Activated CD4-positive, alpha-beta T cell treated with anti-CD3 and anti-CD28 coated beads, Interleukin-2, amount 10 ng/mL, durations not matched to agents 24 days and 14 days (primary cell): ENCODE measurements at regions of chr2 and their contacts with region 1.

Region 1: GRCh38 chr2:168346725-168347477 is 99.5 kb upstream of the STK39 start:
- DNase-seq: peak; percentile 90
- H3K4me3 Mint-ChIP-seq: peak overlapping the region; percentile 84
- H3K27ac Mint-ChIP-seq: no peak overlapping the region
- H3K4me1 Mint-ChIP-seq: peaks cover 6% of the 10 kb centered on the region
- H3K27me3 Mint-ChIP-seq: peaks cover 21% of the 10 kb centered on the region

Region 2: GRCh38 chr2:168323529-168324021 is 23.3 kb before region 1 on chr2:
- intact Hi-C with region 1: no loop called
- DNase-seq: no peak
- H3K4me3 Mint-ChIP-seq: no peak overlapping the region
- H3K27ac Mint-ChIP-seq: no peak overlapping the region
- H3K4me1 Mint-ChIP-seq: peaks cover 2% of the 10 kb centered on the region
- H3K27me3 Mint-ChIP-seq: peaks cover 12% of the 10 kb centered on the region

Region 3: GRCh38 chr2:168434146-168434545 is 87.2 kb after region 1 on chr2:
- intact Hi-C with region 1: loop called (anchors 5 kb)
- DNase-seq: no peak
- H3K4me3 Mint-ChIP-seq: no peak overlapping the region
- H3K27ac Mint-ChIP-seq: no peak overlapping the region
- H3K4me1 Mint-ChIP-seq: peaks cover 33% of the 10 kb centered on the region
- H3K27me3 Mint-ChIP-seq: no peaks in the 10 kb centered on the region

Region 4: GRCh38 chr2:168687314-168687713 is 340.4 kb after region 1 on chr2:
- intact Hi-C with region 1: loop called (anchors 2 kb)
- DNase-seq: peak; percentile 64
- H3K4me3 Mint-ChIP-seq: no peak overlapping the region
- H3K27ac Mint-ChIP-seq: no peak overlapping the region
- H3K4me1 Mint-ChIP-seq: peaks cover 8% of the 10 kb centered on the region
- H3K27me3 Mint-ChIP-seq: no peaks in the 10 kb centered on the region

Region 5: DNA sequence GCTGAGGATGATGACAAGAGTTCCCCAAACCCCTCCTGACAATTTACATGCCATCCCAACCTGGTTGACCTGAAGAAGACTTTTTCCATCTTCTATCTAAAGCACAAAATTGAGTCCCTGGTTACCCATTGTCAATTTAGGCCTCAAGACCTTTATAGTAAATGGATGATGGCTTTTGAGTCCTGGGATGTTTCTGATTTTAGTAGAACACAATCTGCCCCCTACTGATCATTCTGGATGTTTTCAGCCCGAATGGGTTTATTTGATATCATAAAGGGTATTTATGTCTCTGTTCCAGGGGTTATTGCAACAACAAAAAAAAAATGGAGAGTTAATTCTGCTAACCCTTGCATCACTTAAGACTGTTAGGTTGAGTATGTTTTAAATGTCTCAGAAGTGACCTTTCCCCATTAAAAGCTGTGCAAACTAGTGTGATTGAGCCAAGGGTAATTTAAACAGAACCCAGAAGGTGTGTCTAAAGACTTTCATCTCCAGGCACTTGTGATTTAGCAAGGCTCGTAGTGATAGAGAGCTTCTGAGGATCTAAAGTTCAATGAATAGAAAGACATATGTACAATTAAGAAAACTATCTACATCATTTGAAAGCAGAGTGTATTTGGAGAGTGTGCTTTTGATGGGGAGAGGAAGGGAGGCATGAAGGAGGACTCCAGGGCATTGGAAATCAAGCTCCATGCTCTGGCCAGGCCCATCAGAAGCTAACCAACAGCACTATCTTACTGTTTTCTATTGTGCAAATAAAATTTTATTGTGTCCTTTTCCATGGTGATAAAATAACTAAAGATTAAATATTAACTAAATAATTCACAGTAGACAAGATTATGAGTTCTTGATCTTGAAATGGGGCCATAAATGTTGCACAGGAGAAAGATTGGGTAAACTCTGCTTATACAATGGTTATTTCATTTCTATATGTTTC is 358.9 kb after region 1 on chr2:
- intact Hi-C with region 1: loop called (anchors 1 kb)
- DNase-seq: no peak
- H3K4me3 Mint-ChIP-seq: no peak overlapping the region
- H3K27ac Mint-ChIP-seq: no peak overlapping the region
- H3K4me1 Mint-ChIP-seq: no peaks in the 10 kb centered on the region
- H3K27me3 Mint-ChIP-seq: no peaks in the 10 kb centered on the region

Region 6: DNA sequence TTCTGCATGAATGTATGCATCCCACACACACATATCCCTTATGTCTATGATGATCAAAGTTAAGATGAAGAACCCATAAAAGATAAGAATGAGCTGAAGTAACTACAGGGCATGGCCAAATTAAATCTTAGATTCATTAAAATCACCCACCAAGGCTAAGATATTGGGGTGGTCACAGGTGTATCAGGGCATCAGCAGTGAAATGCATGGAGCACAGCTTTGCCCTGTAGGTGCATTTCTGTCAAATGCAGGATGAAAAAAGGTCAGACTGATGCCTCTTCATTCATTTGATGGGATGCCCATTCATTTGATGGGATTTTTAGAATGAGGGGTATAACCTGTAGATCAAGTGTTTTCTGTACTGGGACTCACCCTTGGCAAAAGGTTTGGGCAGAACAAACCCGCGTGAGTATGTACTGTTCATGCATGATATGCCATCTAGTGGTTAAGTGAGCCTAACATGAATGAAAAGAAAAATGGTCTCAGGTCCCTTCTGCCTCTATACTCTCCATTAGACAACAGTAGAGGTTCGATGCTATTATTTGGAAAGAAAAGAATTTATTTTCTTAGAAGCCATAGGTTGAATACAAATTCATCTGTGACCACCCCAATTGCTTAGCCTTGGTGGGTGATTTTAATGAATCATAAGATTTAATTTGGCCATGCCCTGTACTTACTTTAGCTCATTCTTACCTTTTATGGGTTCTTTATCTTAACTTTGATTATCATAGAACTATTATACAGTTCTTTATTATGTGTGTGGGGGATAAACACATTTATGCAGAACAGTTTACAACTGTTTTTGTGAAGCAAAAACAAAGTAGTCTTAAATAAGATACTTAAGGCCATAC is 412.3 kb after region 1 on chr2:
- intact Hi-C with region 1: loop called (anchors 1 kb)
- DNase-seq: peak; percentile 71
- H3K4me3 Mint-ChIP-seq: no peak overlapping the region
- H3K27ac Mint-ChIP-seq: no peak overlapping the region
- H3K4me1 Mint-ChIP-seq: peaks cover 17% of the 10 kb centered on the region
- H3K27me3 Mint-ChIP-seq: no peaks in the 10 kb centered on the region

Region 7: GRCh38 chr2:168920504-168921157 is 573.7 kb after region 1 on chr2:
- intact Hi-C with region 1: loop called (anchors 1 kb)
- DNase-seq: peak; percentile 66
- H3K4me3 Mint-ChIP-seq: no peak overlapping the region
- H3K27ac Mint-ChIP-seq: no peak overlapping the region
- H3K4me1 Mint-ChIP-seq: peaks cover 2% of the 10 kb centered on the region
- H3K27me3 Mint-ChIP-seq: peaks cover 37% of the 10 kb centered on the region